ENCODE measurements at regions of chr1 and their contacts with region 1.

Region 1: GRCh38 chr1:154951901-154952662 is 3.8 kb downstream of the PBXIP1 start:
- DNase-seq: no peak
- H3K4me3 ChIP-seq: no peak overlapping the region
- H3K27ac ChIP-seq: no peak overlapping the region
- H3K4me1 ChIP-seq: peaks cover 45% of the 10 kb centered on the region
- H3K27me3 ChIP-seq: no peaks in the 10 kb centered on the region
- CTCF ChIP-seq: no peak
- POLR2A ChIP-seq: no peak

Region 2: GRCh38 chr1:154453574-154454352 is 498.3 kb before region 1 on chr1:
- intact Hi-C with region 1: no loop called
- DNase-seq: no peak
- H3K4me3 ChIP-seq: no peak overlapping the region
- H3K27ac ChIP-seq: no peak overlapping the region
- H3K4me1 ChIP-seq: no peaks in the 10 kb centered on the region
- H3K27me3 ChIP-seq: no peaks in the 10 kb centered on the region
- CTCF ChIP-seq: no peak
- POLR2A ChIP-seq: no peak

Region 3: GRCh38 chr1:155063550-155064110 is 111.5 kb after region 1 on chr1 and contains the start of gene EFNA4:
- intact Hi-C with region 1: loop called (anchors 5 kb)
- DNase-seq: peak; percentile 88
- H3K4me3 ChIP-seq: peak within 1 kb of the TSS; percentile 71 to 90
- H3K27ac ChIP-seq: peak within 1 kb of the TSS; percentile 77 to 79
- H3K4me1 ChIP-seq: peaks cover 21% of the 10 kb centered on the region
- H3K27me3 ChIP-seq: no peaks in the 10 kb centered on the region
- CTCF ChIP-seq: no peak
- POLR2A ChIP-seq: no peak
- total RNA-seq, gene EFNA4: 5.3 to 6.9 TPM

Measured in testis (tissue), 5 donors.